ENCODE measurements at regions of chr2 and their contacts with region 1.

Region 1: DNA sequence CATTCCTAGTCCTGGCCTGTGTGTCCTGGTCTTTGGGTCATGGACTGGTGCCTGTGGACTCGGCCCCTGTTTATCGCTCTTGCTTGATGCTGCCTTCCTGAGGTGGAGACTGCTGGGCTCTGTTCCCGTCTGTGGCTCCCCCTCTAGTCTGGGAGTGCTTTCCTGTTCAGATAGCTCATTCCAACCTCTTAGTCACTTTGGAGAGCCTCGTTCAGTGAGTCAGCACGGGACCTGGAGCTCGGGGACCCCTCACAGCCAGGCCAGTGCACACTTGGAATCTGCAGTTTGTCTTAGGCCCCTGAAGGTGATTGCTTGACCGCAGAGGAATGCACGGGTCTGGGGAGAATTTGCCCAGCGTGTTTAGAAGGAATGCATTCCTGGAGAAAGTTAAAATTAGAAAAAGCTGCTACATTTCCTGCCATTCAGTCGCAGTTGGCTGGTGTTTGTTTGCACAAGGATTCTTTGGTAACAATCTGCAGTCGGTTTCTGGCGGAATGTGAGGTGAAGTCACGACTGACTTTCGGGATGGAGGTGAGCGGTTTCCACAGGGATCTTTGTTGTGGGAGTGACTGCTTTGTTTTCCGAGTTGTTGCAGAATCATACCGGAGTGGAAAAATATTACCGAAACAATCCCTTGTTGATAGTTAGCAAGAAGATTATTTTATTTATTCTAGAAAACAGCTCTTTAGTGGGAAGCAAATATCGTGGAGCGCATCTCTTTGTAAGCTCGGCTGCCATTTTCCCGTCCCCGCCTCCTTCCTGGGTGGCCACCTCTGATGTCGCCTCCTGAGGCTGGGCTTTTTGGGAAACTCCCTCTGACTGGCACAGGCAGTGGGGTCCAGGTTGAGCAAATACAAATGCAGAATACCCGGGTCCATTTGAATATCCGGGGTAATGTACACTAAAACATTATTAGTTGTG is 29.6 kb downstream of the SH3BP4 start:
- DNase-seq: peak; percentile 98
- H3K4me3 ChIP-seq: peak overlapping the region; percentile 34
- CTCF ChIP-seq: peak; percentile 31

Region 2: GRCh38 chr2:234952270-234953115 is 29.0 kb before region 1 on chr2:
- CTCF ChIA-PET with region 1: interaction called, 3 read pairs
- POLR2A ChIA-PET with region 1: interaction called, 13 read pairs
- DNase-seq: no peak
- H3K4me3 ChIP-seq: peak overlapping the region; percentile 86
- CTCF ChIP-seq: no peak

Region 3: GRCh38 chr2:234957843-234958135 is 23.7 kb before region 1 on chr2:
- CTCF ChIA-PET with region 1: interaction called, 3 read pairs
- POLR2A ChIA-PET with region 1: interaction called, 13 read pairs
- DNase-seq: no peak
- H3K4me3 ChIP-seq: no peak overlapping the region; the same call in 1 of the 2 replicates
- CTCF ChIP-seq: no peak

Region 4: DNA sequence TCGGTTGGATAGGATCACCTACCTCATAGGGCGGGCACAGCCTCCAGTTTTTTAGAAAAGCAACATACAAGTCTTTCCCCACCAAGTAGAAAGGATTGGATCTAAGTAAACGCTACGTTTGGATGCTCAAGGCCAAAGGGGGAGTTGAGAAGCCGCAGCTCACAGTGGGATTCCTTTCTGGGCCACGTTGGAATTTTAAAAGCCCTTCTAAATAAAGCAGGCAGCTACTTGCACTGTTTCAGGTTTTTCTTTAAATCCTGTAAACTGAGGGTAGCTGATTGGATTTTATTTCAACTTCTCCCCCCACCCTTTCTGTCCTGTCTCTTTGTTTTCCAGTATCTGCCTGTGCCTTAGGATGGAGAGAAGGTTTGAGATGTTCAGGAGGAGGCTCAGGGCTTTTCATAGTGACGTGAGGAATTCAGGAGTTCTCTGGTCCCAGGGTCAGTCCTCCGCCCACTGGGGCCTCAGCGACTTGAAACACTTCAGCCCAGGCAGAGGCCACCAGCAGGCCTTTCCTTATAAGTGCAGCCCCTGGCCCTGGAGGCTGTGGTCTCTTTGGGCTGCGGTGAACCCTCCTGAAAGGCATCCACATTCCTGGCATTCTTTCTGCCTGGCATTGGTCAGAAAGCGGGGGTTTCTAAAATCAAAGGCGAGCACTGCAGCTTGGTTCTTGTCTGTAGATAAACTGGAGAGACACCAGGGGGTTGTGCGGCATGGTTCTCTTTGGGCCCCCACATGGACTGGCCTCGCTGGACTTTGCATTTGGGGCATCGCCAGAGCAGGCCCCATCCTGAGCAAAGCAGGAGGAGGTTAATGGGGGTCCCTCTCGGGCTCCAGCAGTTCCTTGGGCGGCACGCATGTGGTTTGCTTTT is 14.8 kb after region 1 on chr2:
- CTCF ChIA-PET with region 1: interaction called, 3 read pairs
- POLR2A ChIA-PET with region 1: interaction called, 12 read pairs
- DNase-seq: peak; percentile 73
- H3K4me3 ChIP-seq: no peak overlapping the region
- CTCF ChIP-seq: peak; percentile 52

Region 5: GRCh38 chr2:235026649-235027557 is 45.4 kb after region 1 on chr2:
- CTCF ChIA-PET with region 1: no interaction called
- POLR2A ChIA-PET with region 1: interaction called, 12 read pairs
- DNase-seq: no peak
- H3K4me3 ChIP-seq: no peak overlapping the region; the same call in 1 of the 2 replicates
- CTCF ChIP-seq: no peak

Measured in AG04449 (cell line).